Heart left ventricle (tissue), 16 donors: ENCODE measurements at regions of chr15 and their contacts with region 1.

Region 1: GRCh38 chr15:63553388-63553791 is 43.8 kb upstream of the FBXL22 start:
- DNase-seq: peak in 3 of 5 donors; percentile 29 to 36 (median 31)
- ATAC-seq: peak; percentile 69 to 92 (median 86)
- H3K4me3 ChIP-seq: peak overlapping the region in 5 of 12 donors; percentile 1 to 14 (median 6)
- H3K27ac ChIP-seq: peak overlapping the region in 8 of 12 donors; percentile 12 to 68 (median 42)
- H3K4me1 ChIP-seq: peaks cover 0 to 41% (median 15%) of the 10 kb centered on the region in 12 donors
- H3K27me3 ChIP-seq: no peaks in the 10 kb centered on the region
- CTCF ChIP-seq: no peak
- POLR2A ChIP-seq: no peak

Region 2: GRCh38 chr15:63487076-63487757 is 66.2 kb before region 1 on chr15:
- intact Hi-C with region 1: loop called in 2 of 10 experiments (anchors 5 kb)
- DNase-seq: peak; percentile 86 to 95 (median 88)
- ATAC-seq: peak; percentile 88 to 95 (median 92)
- H3K4me3 ChIP-seq: peak overlapping the region in 2 of 12 donors; percentile 5 to 19
- H3K27ac ChIP-seq: peak overlapping the region in 1 of 12 donors; percentile 66
- H3K4me1 ChIP-seq: peaks cover 0 to 66% (median 0%) of the 10 kb centered on the region in 12 donors
- H3K27me3 ChIP-seq: no peaks in the 10 kb centered on the region
- CTCF ChIP-seq: peak; percentile 88 to 97 (median 95)
- POLR2A ChIP-seq: no peak